ENCODE measurements at regions of chr22 and their contacts with region 1.

Region 1: GRCh38 chr22:29837780-29838598 is at the start of gene ASCC2:
- DNase-seq: peak; percentile 100
- ATAC-seq: peak; percentile 99
- H3K4me3 Mint-ChIP-seq: peak within 1 kb of the TSS; percentile 99
- H3K27ac Mint-ChIP-seq: peak within 1 kb of the TSS; percentile 97
- H3K4me1 Mint-ChIP-seq: peaks cover 36% of the 10 kb centered on the region
- H3K27me3 Mint-ChIP-seq: no peaks in the 10 kb centered on the region
- total RNA-seq, gene ASCC2: 56.0 to 69.9 TPM

Region 2: DNA sequence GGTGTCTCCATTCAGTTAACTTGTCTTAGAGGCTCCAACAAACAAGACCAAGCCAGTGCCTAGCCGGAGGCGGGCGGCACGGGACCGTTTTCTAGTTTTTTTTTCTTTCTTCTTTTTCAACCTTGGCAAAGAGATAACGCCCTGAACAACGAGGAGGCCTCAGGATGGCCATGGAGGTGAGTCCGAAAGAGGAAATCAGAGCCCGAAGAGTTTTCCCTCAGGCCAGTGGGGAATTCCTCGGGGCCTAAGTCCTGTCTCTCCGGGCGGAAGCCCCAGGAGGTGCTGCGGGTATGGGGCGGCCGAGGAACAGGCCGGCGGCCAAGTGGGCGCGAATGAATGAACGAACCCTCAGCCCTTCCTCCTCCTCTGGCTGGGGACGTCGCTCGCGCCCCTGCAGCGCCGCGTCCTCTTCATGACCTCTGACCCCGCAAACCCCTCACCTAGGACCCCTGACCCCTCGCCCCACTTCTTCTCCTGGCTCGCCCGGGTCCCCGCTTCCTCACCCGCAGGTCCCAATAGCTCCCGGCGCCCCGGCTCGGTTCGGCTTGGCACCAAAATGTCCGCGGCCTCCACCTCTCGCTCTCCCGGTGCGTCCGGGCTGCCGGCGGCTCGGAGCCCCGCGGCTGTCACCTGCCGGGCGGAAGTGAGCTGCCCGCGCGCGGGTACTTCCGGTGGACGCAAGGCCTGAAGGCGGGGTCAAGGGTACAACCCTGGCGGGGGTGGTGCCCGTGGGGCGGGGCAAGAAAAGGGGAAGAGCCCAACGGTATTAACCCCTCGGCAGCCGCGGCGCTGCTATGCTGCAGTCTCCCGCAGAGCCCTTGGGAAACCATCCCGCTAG is 449.8 kb before region 1 on chr22 and contains the start of gene AP1B1:
- CTCF ChIA-PET with region 1: no interaction called
- POLR2A ChIA-PET with region 1: no interaction called
- intact Hi-C with region 1: loop called in 1 of 2 experiments (anchors 1 kb)
- DNase-seq: peak; percentile 97
- ATAC-seq: peak; percentile 99
- H3K4me3 Mint-ChIP-seq: peak within 1 kb of the TSS; percentile 87
- H3K27ac Mint-ChIP-seq: peak within 1 kb of the TSS; percentile 83
- H3K4me1 Mint-ChIP-seq: peaks cover 30% of the 10 kb centered on the region
- H3K27me3 Mint-ChIP-seq: no peaks in the 10 kb centered on the region
- total RNA-seq, gene AP1B1: 56.6 to 59.9 TPM

Region 3: DNA sequence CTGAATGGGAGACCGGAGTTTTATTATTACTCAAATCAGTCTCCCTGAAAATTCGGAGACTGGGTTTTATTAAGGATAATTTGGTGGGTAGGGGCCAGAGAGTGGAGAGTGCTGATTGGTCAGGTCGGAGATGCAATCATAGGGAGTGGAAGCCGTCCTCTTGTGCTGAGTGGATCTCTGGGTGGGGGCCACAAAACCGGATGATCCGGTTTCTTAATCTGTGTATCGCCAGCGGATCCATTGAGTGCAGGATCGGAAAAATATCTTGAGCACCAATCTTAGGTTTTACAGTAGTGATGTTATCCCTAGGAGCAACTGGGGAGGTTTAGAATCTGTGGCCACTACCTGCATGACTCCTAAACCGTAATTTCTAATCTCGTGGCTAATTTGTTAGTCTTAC is 256.2 kb before region 1 on chr22:
- CTCF ChIA-PET with region 1: no interaction called
- POLR2A ChIA-PET with region 1: no interaction called
- intact Hi-C with region 1: loop called in 1 of 2 experiments (anchors 1 kb)
- DNase-seq: no peak
- ATAC-seq: no peak
- H3K4me3 Mint-ChIP-seq: peak overlapping the region; percentile 89
- H3K27ac Mint-ChIP-seq: peak overlapping the region; percentile 93
- H3K4me1 Mint-ChIP-seq: peaks cover 8% of the 10 kb centered on the region
- H3K27me3 Mint-ChIP-seq: no peaks in the 10 kb centered on the region

Region 4: DNA sequence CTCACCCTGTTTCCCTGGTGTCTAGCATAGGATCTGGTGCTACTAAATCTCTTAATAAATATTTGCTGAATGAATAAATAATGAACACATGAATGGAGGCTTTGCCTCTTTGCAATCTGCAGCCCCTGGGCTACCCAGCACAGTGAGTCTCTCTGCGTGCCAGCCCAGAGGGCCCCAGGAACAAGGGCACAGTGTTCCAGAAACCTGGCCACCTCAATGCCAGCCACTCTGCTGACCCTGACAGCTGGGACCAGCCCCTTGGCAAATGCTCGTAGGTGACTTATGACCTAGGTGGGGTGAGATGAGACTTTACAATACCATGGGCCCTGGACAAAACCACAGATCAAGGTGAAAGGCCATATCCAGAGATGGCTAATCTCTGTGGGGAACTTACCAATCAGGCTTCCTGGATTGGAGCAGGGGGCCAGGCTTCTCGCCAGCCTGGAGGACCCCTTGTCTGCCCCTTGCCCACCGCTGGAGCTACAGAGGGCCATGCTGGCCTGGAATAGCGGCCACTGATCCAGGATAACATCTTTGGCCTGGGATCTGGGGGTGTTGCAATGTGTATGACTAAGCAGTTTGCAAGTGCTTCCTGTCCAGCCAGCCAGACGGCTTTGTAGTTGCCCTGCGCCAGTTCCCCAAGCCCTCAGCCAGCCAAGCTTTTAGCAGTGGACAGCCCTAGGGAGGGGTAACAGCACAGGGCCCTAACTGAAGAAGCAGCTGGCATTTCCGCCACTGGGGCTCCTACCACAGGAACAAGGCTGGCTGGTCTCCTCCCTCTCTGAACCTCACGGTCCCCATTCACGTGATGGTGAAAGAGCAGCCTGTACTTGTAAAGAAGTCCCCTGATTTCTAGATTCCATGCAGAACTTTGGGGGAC is 38.9 kb before region 1 on chr22:
- CTCF ChIA-PET with region 1: no interaction called
- POLR2A ChIA-PET with region 1: no interaction called
- intact Hi-C with region 1: no loop called
- DNase-seq: no peak
- ATAC-seq: no peak
- H3K4me3 Mint-ChIP-seq: no peak overlapping the region
- H3K27ac Mint-ChIP-seq: no peak overlapping the region
- H3K4me1 Mint-ChIP-seq: no peaks in the 10 kb centered on the region
- H3K27me3 Mint-ChIP-seq: no peaks in the 10 kb centered on the region

Region 5: DNA sequence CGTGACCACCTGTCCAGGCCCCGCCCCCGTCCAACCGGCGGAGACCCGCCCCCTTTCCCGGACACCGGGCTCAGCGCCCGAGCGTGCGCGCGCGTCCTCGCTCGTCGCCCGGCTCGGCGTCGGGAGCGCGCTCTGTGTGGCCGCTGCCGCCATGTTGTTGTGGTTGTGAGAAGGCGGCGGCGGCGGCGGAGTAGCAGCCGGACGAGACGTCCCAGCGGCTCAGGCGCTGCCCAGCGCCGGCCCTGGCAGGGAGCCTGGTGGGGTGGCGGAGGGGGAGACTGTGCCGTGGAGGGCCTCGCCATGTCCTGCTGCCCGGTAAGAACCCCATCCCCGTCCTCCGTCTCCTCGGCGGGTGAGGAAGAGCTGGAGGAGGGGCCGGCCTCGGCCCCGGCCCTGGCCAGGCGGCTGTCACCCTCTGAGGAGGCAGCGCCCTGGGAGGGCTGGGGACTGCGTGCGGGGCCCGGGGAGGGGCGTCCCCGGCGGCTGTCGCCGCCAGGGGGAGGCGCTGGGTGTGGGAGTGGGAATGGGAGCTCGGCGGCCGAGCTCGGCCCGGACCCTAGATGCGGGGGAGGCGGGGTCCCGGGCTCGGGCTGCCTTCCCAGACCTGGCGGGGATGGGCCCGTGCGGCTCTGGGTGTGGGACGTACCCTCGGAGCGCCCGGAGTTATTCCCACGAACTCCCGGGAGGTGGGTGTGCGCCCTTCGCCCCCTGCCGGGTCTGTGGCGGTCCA is 45.2 kb after region 1 on chr22 and contains the start of gene MTMR3:
- CTCF ChIA-PET with region 1: no interaction called
- POLR2A ChIA-PET with region 1: interaction called, 3 read pairs
- intact Hi-C with region 1: loop called (anchors 1 kb)
- DNase-seq: peak; percentile 95
- ATAC-seq: peak; percentile 83
- H3K4me3 Mint-ChIP-seq: peak within 1 kb of the TSS; percentile 89
- H3K27ac Mint-ChIP-seq: peak within 1 kb of the TSS; percentile 84
- H3K4me1 Mint-ChIP-seq: peaks cover 6% of the 10 kb centered on the region
- H3K27me3 Mint-ChIP-seq: no peaks in the 10 kb centered on the region
- total RNA-seq, gene MTMR3: 19.2 to 22.8 TPM

Region 6: GRCh38 chr22:30326706-30327362 is 488.8 kb after region 1 on chr22 and contains the start of gene TBC1D10A:
- CTCF ChIA-PET with region 1: no interaction called
- POLR2A ChIA-PET with region 1: interaction called, 3 read pairs
- intact Hi-C with region 1: loop called in 1 of 2 experiments (anchors 5 kb)
- DNase-seq: peak; percentile 97
- ATAC-seq: peak; percentile 87
- H3K4me3 Mint-ChIP-seq: peak within 1 kb of the TSS; percentile 82
- H3K27ac Mint-ChIP-seq: peak within 1 kb of the TSS; percentile 89
- H3K4me1 Mint-ChIP-seq: peaks cover 45% of the 10 kb centered on the region
- H3K27me3 Mint-ChIP-seq: no peaks in the 10 kb centered on the region
- total RNA-seq, gene TBC1D10A: 20.1 to 21.6 TPM